ENCODE measurements at regions of chr7 and their contacts with region 1.

Region 1: DNA sequence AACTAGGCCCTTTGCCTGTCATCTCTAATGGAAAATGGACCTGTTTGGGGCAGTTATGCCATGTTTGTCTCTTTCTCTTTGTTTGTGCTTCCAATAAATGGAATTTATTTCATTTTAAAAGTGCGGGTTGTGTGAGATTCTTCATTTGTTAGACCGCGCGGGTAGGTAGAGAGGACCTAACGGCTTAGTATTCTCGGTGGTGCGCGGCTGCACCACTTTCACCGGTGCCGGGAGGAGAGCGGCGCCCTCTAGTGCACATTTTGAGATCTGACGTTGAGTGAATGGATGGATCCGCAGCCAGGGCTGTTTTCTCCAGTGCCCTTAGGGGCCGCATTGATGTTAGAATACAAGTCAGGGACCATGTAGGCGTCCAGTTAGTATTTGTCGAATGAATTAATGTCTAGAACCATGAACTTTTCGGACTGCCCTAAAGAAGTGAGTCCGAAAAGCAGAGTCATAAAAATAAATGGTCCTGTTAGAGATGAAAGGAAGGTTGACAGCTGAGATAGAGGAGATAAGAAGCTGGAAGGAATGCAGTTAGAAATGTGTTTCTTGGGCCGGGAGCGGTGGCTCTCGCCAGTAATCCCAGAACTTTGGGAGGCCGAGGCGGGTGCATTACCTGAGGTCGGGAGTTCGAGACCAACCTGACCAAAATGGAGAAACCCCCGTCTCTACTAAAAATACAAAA is 29.3 kb upstream of the GIMAP8 start:
- DNase-seq: peak; percentile 94
- H3K4me3 ChIP-seq: peak overlapping the region in 1 of 8 donors; percentile 28
- H3K27ac ChIP-seq: no peak overlapping the region
- H3K4me1 ChIP-seq: peaks cover 0 to 12% (median 7%) of the 10 kb centered on the region in 6 donors
- H3K27me3 ChIP-seq: no peaks in the 10 kb centered on the region
- CTCF ChIP-seq: peak; percentile 73 to 94 (median 85)
- POLR2A ChIP-seq: no peak

Region 2: DNA sequence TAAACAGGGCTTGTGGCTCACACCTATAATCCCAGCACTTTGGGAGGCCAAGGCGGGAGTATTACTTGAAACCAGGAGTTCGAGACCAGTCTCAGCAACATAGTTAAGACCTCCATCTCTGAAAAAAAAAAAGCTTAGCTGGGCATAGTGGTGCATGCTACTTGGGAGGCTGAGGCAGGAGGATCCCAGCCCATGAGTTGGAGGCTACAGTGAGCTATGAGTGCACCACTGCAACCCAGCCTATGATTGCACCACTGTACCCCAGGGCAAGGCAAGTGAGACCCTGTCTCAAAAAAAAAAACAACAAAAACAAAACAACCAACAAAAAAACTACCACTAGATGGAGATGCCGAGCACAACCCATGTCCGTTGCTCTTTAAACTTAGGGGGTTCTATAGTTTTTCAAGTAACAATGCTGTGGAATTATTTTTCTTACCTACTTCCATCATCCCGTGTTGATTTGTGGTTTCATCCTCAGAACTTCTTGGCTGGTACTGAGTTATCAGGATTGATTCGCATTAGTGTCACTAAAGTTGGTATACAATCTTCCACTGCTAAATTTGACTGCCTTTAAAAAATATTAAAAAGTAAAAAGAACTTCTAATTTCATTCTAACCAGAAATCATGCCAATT is 64.8 kb before region 1 on chr7:
- intact Hi-C with region 1: loop called (anchors 2 kb)
- DNase-seq: no peak
- H3K4me3 ChIP-seq: no peak overlapping the region
- H3K27ac ChIP-seq: peak overlapping the region in 3 of 8 donors; percentile 43 to 51 (median 45)
- H3K4me1 ChIP-seq: peaks cover 0 to 39% (median 22%) of the 10 kb centered on the region in 6 donors
- H3K27me3 ChIP-seq: no peaks in the 10 kb centered on the region
- CTCF ChIP-seq: peak in 9 of 11 experiments; percentile 18 to 75 (median 59)
- POLR2A ChIP-seq: no peak

Measured in spleen (tissue), 13 donors.